Activated CD4-positive, alpha-beta T cell treated with anti-CD3 and anti-CD28 coated beads for 36 hours (primary cell): ENCODE measurements at regions of chr2 and their contacts with region 1.

Region 1: DNA sequence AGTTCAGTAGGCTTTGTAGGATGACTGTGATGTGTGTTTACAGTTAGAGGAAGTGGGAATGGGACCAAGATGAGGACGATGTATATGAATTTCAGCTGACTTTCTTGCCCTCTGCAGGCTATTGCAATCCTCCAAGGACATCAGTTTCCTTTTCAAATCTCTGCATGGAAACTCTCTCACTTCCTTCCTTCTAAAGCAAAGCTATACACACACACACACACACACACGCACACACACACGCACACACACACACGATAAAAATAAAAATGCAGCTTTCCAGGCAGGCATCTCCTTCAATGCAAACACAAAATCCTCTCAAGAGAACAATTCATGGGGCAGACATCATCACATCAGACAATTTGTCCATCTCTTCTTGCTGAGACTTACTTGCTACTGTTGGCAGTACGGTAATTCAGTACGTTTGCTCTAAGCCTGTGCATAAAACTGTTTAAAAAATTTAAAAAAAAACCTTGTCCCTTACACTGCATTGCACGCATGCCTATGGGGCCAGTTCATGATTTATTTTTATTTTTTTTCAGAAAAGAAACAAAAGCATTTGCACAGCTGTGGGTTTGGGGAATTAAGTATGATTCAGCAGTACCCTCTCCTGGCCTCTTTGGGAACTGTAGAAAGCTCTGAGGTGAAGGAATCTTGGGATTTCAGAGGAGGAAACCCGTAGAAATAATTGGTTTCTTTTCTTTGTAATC is 27.1 kb upstream of the ICOS start:
- DNase-seq: peak; percentile 44
- ATAC-seq: peak; percentile 72
- H3K4me3 Mint-ChIP-seq: peak overlapping the region; percentile 0
- H3K27ac Mint-ChIP-seq: peak overlapping the region; percentile 44
- H3K4me1 Mint-ChIP-seq: peaks cover 30% of the 10 kb centered on the region
- H3K27me3 Mint-ChIP-seq: peaks cover 2% of the 10 kb centered on the region

Region 2: GRCh38 chr2:203858176-203858575 is 51.2 kb before region 1 on chr2:
- CTCF ChIA-PET with region 1: interaction called, 12 read pairs
- POLR2A ChIA-PET with region 1: no interaction called
- intact Hi-C with region 1: loop called (anchors 1 kb)
- DNase-seq: peak; percentile 62
- ATAC-seq: peak; percentile 57
- H3K4me3 Mint-ChIP-seq: peak overlapping the region; percentile 15
- H3K27ac Mint-ChIP-seq: peak overlapping the region; percentile 66
- H3K4me1 Mint-ChIP-seq: peaks cover 85% of the 10 kb centered on the region
- H3K27me3 Mint-ChIP-seq: no peaks in the 10 kb centered on the region

Region 3: GRCh38 chr2:203893401-203893800 is 16.0 kb before region 1 on chr2:
- CTCF ChIA-PET with region 1: interaction called, 6 read pairs
- POLR2A ChIA-PET with region 1: no interaction called
- intact Hi-C with region 1: loop called in 1 of 2 experiments (anchors 1 kb)
- DNase-seq: no peak
- ATAC-seq: no peak
- H3K4me3 Mint-ChIP-seq: peak overlapping the region; percentile 23
- H3K27ac Mint-ChIP-seq: peak overlapping the region; percentile 85
- H3K4me1 Mint-ChIP-seq: peaks cover 78% of the 10 kb centered on the region
- H3K27me3 Mint-ChIP-seq: peaks cover 2% of the 10 kb centered on the region